ENCODE measurements at regions of chr3 and their contacts with region 1.

Region 1: DNA sequence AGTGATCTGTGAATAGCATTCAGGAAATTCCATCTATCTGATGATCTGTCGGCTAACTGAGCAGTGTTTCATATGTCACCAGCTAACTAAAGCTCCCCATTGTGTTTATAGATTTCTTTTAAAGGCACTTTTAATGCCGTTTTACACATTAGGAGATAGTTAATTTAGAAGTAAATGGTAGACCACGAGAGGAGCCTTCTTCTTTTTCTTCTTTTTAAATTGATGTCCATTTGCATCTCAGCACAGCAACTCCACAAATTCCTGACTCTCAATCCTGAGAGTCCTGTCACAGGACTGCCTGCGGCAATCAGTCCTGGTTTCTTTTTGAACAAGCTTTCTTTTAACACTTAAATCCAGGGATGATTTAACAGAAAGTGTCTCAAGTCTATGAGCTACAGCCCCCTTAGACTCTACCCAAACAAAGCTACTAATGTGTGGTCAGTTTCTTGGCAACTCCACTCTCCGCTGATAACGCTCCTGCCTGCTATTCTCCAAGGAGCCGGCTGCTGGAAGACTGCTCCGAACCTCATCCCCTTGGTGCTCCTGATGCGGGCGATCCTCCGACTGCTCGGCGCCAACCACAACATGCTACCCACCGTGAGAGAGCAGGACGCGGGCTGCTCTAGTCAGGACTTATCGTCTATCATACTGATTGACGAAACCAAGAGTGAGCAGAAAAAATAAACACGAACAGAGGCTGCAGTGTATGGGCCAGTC is 421.4 kb downstream of the MECOM start:
- DNase-seq: peak; percentile 52
- H3K4me3 Mint-ChIP-seq: peak overlapping the region; percentile 78
- H3K27ac Mint-ChIP-seq: peak overlapping the region; percentile 90
- H3K4me1 Mint-ChIP-seq: peaks cover 52% of the 10 kb centered on the region
- H3K27me3 Mint-ChIP-seq: no peaks in the 10 kb centered on the region
- CTCF ChIP-seq: no peak

Region 2: GRCh38 chr3:169286214-169286613 is 44.1 kb after region 1 on chr3:
- CTCF ChIA-PET with region 1: interaction called, 8 read pairs
- intact Hi-C with region 1: loop called (anchors 2 kb)
- DNase-seq: peak; percentile 66
- H3K4me3 Mint-ChIP-seq: peak overlapping the region; percentile 68
- H3K27ac Mint-ChIP-seq: peak overlapping the region; percentile 98
- H3K4me1 Mint-ChIP-seq: peaks cover 54% of the 10 kb centered on the region
- H3K27me3 Mint-ChIP-seq: no peaks in the 10 kb centered on the region
- CTCF ChIP-seq: no peak

Region 3: DNA sequence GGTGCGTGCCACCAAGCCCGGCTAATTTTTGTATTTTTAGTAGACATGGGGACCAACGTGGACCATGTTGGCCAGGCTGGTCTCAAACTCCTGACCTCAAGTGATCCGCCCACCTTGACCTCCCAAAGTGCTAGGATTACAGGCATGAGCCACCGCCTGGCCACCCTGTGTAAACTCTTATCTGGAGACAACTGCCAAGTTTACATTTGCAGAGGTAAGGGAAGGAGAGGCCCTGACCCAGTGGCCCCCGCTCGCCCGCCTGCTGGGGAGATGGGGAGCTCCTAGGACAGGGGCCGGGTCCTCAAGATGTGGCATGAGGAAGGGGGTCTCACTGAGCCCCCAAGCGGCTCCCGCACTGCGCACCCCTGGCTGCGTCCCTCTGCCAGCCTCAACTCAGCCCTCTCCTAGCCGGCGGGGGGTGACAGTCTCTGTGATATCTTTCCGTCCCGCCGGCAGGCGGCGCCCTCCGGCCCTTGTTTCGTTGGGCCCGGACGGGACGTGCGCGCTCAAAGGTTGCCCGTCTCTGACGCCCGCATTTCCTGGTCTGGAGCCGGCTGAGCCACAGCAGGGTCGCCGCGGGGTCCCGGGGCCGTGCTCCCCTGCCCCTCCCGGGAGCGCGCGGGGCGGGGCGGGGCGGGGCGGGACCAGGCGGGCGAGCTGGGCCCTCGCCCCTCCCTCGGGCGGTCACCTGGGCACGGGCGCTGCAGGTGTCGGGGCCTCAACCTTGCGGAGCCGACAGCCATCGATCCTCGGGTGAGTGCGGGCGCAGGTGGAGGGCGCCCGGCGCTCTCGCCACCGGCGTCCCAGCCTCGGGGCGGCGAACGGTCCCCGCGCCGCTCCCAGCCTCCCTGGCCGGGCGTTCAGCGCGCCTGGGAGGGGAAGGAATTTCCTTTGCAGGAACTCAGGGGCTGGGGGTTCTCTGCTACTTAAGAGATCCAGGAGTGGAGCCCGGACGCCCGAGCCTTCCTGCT is 795.6 kb after region 1 on chr3 and contains the start of gene GPR160:
- CTCF ChIA-PET with region 1: no interaction called
- intact Hi-C with region 1: no loop called
- DNase-seq: peak; percentile 97
- H3K4me3 Mint-ChIP-seq: peak within 1 kb of the TSS; percentile 93
- H3K27ac Mint-ChIP-seq: peak within 1 kb of the TSS; percentile 75
- H3K4me1 Mint-ChIP-seq: peaks cover 22% of the 10 kb centered on the region
- H3K27me3 Mint-ChIP-seq: no peaks in the 10 kb centered on the region
- CTCF ChIP-seq: peak; percentile 99
- total RNA-seq, gene GPR160: 48.6 and 53.8 TPM in 2 replicates

Measured in Calu3 (cell line).